ENCODE measurements at regions of chr9 and their contacts with region 1.

Region 1: DNA sequence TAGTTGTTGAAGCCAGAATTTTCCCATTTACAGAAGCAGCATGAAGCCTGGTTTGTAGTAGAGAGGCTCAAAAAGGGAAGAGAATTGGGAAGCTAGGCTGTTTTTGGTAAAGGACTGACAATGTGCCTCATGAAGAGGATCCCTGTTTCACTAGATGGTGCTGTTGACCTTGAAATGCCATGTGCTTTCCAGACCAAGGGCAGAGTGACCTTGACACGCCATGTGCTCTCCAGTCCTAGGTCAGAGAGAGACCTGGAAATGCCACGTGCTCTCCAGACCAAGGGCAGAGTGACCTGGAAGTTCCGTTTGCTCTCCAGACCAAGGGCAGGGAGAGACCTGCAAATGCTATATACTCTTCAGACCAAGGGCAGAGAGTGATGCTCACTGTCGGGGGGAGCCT is 32.0 kb downstream of the UNC13B start:
- DNase-seq: peak; percentile 64
- ATAC-seq: peak; percentile 52
- H3K4me3 ChIP-seq: no peak overlapping the region
- H3K27ac ChIP-seq: peak overlapping the region; percentile 33
- H3K4me1 ChIP-seq: peaks cover 11% of the 10 kb centered on the region
- H3K27me3 ChIP-seq: no peaks in the 10 kb centered on the region
- CTCF ChIP-seq: peak; percentile 90
- EP300 ChIP-seq: no peak
- POLR2A ChIP-seq: no peak
- RAD21 ChIP-seq: peak; percentile 54

Region 2: GRCh38 chr9:35205340-35205739 is 11.6 kb after region 1 on chr9:
- CTCF ChIA-PET with region 1: no interaction called
- POLR2A ChIA-PET with region 1: no interaction called
- in situ Hi-C with region 1: no loop called
- intact Hi-C with region 1: no loop called
- DNase-seq: no peak
- ATAC-seq: no peak
- H3K4me3 ChIP-seq: no peak overlapping the region
- H3K27ac ChIP-seq: no peak overlapping the region
- H3K4me1 ChIP-seq: peaks cover 11% of the 10 kb centered on the region
- H3K27me3 ChIP-seq: no peaks in the 10 kb centered on the region
- CTCF ChIP-seq: no peak
- EP300 ChIP-seq: no peak
- POLR2A ChIP-seq: no peak
- RAD21 ChIP-seq: no peak

Region 3: DNA sequence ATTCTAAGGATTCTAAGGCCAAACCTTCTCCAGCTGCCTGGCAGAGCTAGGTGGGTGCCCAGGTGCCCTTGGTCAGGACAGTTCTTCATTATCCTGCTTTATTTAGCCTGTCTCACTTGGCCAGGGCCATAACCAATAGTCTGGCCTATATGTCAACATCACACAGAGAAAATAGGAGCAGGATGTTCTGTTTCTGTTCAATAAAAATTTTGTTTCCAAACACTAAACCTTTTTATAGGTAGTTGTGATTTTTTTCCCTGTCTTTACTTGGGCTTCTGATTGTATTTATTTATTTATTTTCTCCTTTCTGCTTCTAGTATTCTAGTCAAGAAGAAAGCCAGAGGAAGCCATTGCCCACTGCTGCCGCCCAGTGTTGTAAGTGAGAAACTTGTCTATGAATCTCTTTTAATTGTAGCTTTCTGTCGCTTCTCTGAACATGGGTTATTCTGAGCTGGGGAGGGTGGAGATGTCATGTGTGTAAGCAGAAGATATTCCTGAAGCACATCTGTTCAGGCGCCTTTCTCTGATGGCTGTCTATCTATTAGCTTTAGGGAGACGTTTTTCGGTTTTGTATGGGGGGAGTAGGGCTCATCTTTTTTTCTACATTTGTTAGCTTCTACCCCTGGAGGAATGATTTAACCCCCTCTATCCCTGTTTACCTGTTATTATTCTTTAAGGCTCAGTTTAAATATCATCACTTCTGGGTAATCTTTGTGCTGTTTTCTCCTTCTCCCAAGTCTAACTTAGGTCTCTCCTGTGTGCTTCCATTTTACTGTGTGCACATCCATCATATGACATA is 65.1 kb after region 1 on chr9:
- CTCF ChIA-PET with region 1: interaction called, 5 read pairs
- POLR2A ChIA-PET with region 1: no interaction called
- in situ Hi-C with region 1: no loop called
- intact Hi-C with region 1: loop called (anchors 5 kb)
- DNase-seq: peak; percentile 71
- ATAC-seq: peak; percentile 86
- H3K4me3 ChIP-seq: peak overlapping the region; percentile 44 to 63 (median 48)
- H3K27ac ChIP-seq: peak overlapping the region; percentile 81
- H3K4me1 ChIP-seq: peaks cover 23% of the 10 kb centered on the region
- H3K27me3 ChIP-seq: no peaks in the 10 kb centered on the region
- CTCF ChIP-seq: peak; percentile 77
- EP300 ChIP-seq: no peak
- POLR2A ChIP-seq: no peak
- RAD21 ChIP-seq: peak; percentile 60; the same call in 1 of the 2 replicates

Region 4: DNA sequence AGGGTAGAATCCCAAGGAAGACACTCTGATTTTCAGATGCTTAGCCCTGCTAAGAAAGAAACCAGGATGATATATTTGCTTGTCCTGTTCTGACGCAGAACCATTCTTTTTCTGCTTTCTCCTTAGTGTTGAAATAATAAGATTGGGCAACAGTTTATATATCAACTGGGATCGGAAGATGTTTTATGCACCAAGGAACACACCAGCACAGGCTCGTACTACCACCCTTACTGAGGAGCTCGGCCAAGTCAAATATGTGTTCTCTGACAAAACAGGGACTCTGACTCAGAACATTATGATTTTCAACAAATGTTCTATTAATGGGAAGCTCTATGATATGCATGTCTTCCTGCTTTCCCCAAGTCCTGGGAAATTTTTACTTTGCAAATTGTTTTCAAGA is 277.1 kb after region 1 on chr9:
- CTCF ChIA-PET with region 1: no interaction called
- POLR2A ChIA-PET with region 1: no interaction called
- in situ Hi-C with region 1: loop called (anchors 10 kb)
- intact Hi-C with region 1: no loop called
- DNase-seq: no peak
- ATAC-seq: no peak
- H3K4me3 ChIP-seq: no peak overlapping the region
- H3K27ac ChIP-seq: no peak overlapping the region
- H3K4me1 ChIP-seq: peaks cover 8% of the 10 kb centered on the region; the same call in 1 of the 2 replicates
- H3K27me3 ChIP-seq: peaks cover 0 to 1% of the 10 kb centered on the region in 2 experiments; a peak in 1 of 5 replicates
- CTCF ChIP-seq: no peak
- EP300 ChIP-seq: no peak
- POLR2A ChIP-seq: no peak
- RAD21 ChIP-seq: no peak

Region 5: GRCh38 chr9:35481347-35481975 is 287.7 kb after region 1 on chr9:
- CTCF ChIA-PET with region 1: interaction called, 6 read pairs
- POLR2A ChIA-PET with region 1: no interaction called
- in situ Hi-C with region 1: loop called (anchors 10 kb)
- intact Hi-C with region 1: loop called (anchors 1 kb)
- DNase-seq: peak; percentile 54
- ATAC-seq: peak; percentile 75
- H3K4me3 ChIP-seq: no peak overlapping the region
- H3K27ac ChIP-seq: no peak overlapping the region
- H3K4me1 ChIP-seq: peaks cover 7% of the 10 kb centered on the region; the same call in 1 of the 2 replicates
- H3K27me3 ChIP-seq: no peaks in the 10 kb centered on the region
- CTCF ChIP-seq: peak; percentile 79
- EP300 ChIP-seq: no peak
- POLR2A ChIP-seq: no peak
- RAD21 ChIP-seq: peak; percentile 64; the same call in 1 of the 2 replicates